Naive thymus-derived CD4-positive, alpha-beta T cell (primary cell): ENCODE measurements at regions of chr4 and their contacts with region 1.

Region 1: DNA sequence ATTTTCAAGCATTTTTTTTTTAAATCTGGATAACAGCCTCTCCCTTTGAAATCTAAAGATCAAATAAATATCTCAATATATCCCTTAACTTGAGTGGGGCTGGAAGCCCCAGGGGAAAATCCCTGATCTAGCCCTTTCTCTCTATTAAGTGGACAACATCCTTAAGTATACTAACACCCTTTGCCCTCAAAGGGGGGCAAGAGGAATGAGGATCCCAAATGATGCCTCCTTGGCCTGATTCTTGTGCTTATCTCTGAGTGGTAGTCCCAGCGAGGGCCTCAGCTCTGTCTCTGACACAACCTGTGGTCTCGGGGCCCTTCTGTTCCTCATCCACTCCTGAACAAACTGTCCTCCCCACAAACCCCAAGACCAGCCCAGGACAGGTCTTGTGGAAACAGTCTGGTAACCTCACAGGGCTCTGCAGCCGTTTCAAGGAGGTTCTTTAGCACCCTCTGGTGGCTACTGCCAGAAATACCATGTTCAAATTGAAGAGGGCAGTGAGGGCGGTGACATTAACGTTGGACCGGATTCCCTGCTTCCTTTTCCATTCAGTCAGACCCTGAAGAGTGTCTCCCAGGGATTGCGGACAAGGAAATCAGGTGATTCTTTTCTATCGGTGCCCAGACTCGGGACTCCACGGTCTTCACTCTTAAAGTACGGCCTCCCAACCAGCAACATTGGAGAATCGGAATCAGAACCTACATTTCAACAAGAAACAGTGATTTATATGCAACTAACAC is 12.9 kb downstream of the CXCL13 start:
- DNase-seq: peak; percentile 13 to 63 (median 42)
- ATAC-seq: peak; percentile 86
- H3K4me3 ChIP-seq: no peak overlapping the region
- H3K4me3 Mint-ChIP-seq: peak overlapping the region in 1 of 10 donors; percentile 51
- H3K27ac ChIP-seq: no peak overlapping the region
- H3K27ac Mint-ChIP-seq: no peak overlapping the region
- H3K4me1 ChIP-seq: no peaks in the 10 kb centered on the region
- H3K4me1 Mint-ChIP-seq: peaks cover 5 to 12% (median 7%) of the 10 kb centered on the region in 7 donors
- H3K27me3 ChIP-seq: no peaks in the 10 kb centered on the region
- H3K27me3 Mint-ChIP-seq: peaks cover 6 to 32% (median 23%) of the 10 kb centered on the region in 5 donors

Region 2: DNA sequence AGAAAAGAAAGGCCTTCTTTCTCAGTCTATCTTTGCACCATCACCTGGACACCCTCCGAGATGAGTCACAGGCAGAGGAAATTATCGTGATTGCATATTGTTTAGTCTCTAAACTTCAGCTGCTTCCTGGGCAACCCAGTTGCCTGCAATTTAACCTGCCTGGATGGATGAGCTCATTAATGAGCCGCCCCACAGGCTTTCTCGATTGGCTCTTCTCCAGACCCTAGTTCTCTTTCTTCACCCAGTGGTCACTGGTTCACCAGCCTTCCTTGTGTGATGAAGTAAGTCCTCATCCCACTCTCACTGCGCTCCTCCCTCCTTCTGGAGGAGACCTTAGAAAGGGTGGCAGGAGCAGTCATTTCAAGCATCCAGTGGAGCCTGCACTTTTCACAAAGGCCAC is 815.0 kb before region 1 on chr4:
- CTCF ChIA-PET with region 1: no interaction called
- POLR2A ChIA-PET with region 1: no interaction called
- intact Hi-C with region 1: no loop called
- DNase-seq: no peak
- ATAC-seq: no peak
- H3K4me3 ChIP-seq: no peak overlapping the region
- H3K4me3 Mint-ChIP-seq: no peak overlapping the region
- H3K27ac ChIP-seq: no peak overlapping the region
- H3K27ac Mint-ChIP-seq: peak overlapping the region in 1 of 9 donors; percentile 73
- H3K4me1 ChIP-seq: no peaks in the 10 kb centered on the region
- H3K4me1 Mint-ChIP-seq: no peaks in the 10 kb centered on the region
- H3K27me3 ChIP-seq: no peaks in the 10 kb centered on the region
- H3K27me3 Mint-ChIP-seq: peaks cover 0 to 23% (median 0%) of the 10 kb centered on the region in 5 donors

Region 3: DNA sequence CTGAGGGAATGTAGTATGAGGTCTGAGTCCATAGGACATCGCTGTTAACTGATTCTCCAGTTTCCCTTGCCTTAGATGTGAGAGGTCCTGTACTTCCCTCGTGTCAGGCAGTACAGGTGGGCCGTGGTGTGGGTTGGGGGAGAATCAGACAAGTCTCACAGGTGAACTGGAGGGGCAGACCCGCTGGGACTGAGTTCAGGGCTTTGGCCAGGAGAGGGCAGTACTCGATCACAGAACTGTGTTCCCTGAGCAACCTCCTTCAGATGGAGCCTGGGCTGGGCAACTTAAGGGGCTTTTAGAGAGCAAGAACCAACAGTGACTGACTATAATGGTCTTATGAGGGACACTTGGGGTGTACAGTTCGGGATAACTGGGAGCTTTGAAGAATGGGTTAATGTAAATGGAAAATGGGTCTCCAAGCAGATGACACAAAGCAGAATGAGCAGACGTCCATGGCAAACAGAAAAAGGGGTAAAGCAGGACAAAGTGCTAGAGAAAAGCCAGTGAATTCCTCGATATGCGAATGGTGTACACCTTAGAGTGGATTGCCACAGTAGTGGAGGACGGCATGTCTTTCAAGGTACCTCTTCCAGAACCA is 378.0 kb before region 1 on chr4:
- CTCF ChIA-PET with region 1: no interaction called
- POLR2A ChIA-PET with region 1: no interaction called
- intact Hi-C with region 1: loop called in 1 of 2 experiments (anchors 5 kb)
- DNase-seq: peak in 8 of 9 donors; percentile 11 to 59 (median 30)
- ATAC-seq: peak; percentile 47
- H3K4me3 ChIP-seq: no peak overlapping the region
- H3K4me3 Mint-ChIP-seq: no peak overlapping the region
- H3K27ac ChIP-seq: no peak overlapping the region
- H3K27ac Mint-ChIP-seq: peak overlapping the region in 1 of 9 donors; percentile 10
- H3K4me1 ChIP-seq: no peaks in the 10 kb centered on the region
- H3K4me1 Mint-ChIP-seq: no peaks in the 10 kb centered on the region
- H3K27me3 ChIP-seq: no peaks in the 10 kb centered on the region
- H3K27me3 Mint-ChIP-seq: peaks cover 3 to 12% (median 6%) of the 10 kb centered on the region in 5 donors

Region 4: GRCh38 chr4:77367638-77368037 is 250.9 kb before region 1 on chr4:
- CTCF ChIA-PET with region 1: no interaction called
- POLR2A ChIA-PET with region 1: no interaction called
- intact Hi-C with region 1: loop called in 1 of 2 experiments (anchors 5 kb)
- DNase-seq: no peak
- ATAC-seq: no peak
- H3K4me3 ChIP-seq: no peak overlapping the region
- H3K4me3 Mint-ChIP-seq: no peak overlapping the region
- H3K27ac ChIP-seq: no peak overlapping the region
- H3K27ac Mint-ChIP-seq: no peak overlapping the region
- H3K4me1 ChIP-seq: no peaks in the 10 kb centered on the region
- H3K4me1 Mint-ChIP-seq: no peaks in the 10 kb centered on the region
- H3K27me3 ChIP-seq: no peaks in the 10 kb centered on the region
- H3K27me3 Mint-ChIP-seq: peaks cover 0 to 20% (median 7%) of the 10 kb centered on the region in 5 donors

Region 5: DNA sequence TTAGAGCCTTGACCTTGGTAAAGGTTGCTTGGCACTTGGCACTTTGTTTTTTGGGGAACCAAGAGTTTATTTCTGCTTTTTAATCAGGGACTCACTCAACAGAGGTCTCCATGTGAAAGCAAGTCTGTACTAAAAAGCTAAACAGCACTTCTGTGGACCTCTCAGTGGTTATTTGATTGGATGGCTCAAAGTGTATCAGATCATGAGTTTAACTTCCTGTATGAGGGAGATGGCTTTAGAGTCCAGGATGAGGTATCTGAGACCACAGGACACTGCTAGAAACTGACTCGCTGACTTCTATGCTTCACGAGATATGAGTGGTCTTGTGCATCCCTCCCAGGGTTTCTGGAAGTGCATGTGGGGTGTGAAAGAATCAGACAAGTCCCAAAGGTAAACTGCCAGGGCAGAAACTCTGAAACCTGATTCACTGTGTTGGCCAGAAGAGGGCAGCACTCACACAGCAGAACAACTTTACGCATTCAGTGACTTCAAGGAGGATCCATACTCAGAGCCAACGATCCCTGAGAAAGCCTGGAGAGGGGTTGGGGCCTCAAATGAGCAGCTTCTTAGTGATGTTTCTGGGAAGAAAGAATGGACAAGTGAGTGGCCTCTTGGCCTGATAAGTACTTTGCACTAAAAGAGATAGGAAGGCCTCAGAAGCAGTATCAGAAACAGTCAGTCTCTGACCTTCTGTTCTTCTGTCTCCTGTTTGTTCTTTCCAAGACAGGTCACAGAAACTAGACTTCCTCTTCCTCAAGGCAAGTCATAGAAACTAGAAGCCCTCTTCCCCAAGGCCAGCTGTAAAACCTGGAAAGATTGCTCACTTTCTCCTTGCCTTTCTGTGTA is 233.2 kb before region 1 on chr4:
- CTCF ChIA-PET with region 1: no interaction called
- POLR2A ChIA-PET with region 1: no interaction called
- intact Hi-C with region 1: loop called in 1 of 2 experiments (anchors 1 kb)
- DNase-seq: peak in 7 of 9 donors; percentile 19 to 51 (median 39)
- ATAC-seq: peak; percentile 72
- H3K4me3 ChIP-seq: no peak overlapping the region
- H3K4me3 Mint-ChIP-seq: no peak overlapping the region
- H3K27ac ChIP-seq: no peak overlapping the region
- H3K27ac Mint-ChIP-seq: no peak overlapping the region
- H3K4me1 ChIP-seq: no peaks in the 10 kb centered on the region
- H3K4me1 Mint-ChIP-seq: peaks cover 0 to 8% (median 0%) of the 10 kb centered on the region in 7 donors
- H3K27me3 ChIP-seq: no peaks in the 10 kb centered on the region
- H3K27me3 Mint-ChIP-seq: peaks cover 0 to 8% (median 0%) of the 10 kb centered on the region in 5 donors

Region 6: GRCh38 chr4:77465271-77465670 is 153.3 kb before region 1 on chr4:
- CTCF ChIA-PET with region 1: no interaction called
- POLR2A ChIA-PET with region 1: no interaction called
- intact Hi-C with region 1: loop called in 1 of 2 experiments (anchors 2 kb)
- DNase-seq: peak in 1 of 9 donors; percentile 33
- ATAC-seq: no peak
- H3K4me3 ChIP-seq: no peak overlapping the region
- H3K4me3 Mint-ChIP-seq: no peak overlapping the region
- H3K27ac ChIP-seq: no peak overlapping the region
- H3K27ac Mint-ChIP-seq: no peak overlapping the region
- H3K4me1 ChIP-seq: no peaks in the 10 kb centered on the region
- H3K4me1 Mint-ChIP-seq: no peaks in the 10 kb centered on the region
- H3K27me3 ChIP-seq: no peaks in the 10 kb centered on the region
- H3K27me3 Mint-ChIP-seq: peaks cover 0 to 27% (median 13%) of the 10 kb centered on the region in 5 donors